HEK293 (cell line): ENCODE measurements at regions of chr11 and their contacts with region 1.

Region 1: DNA sequence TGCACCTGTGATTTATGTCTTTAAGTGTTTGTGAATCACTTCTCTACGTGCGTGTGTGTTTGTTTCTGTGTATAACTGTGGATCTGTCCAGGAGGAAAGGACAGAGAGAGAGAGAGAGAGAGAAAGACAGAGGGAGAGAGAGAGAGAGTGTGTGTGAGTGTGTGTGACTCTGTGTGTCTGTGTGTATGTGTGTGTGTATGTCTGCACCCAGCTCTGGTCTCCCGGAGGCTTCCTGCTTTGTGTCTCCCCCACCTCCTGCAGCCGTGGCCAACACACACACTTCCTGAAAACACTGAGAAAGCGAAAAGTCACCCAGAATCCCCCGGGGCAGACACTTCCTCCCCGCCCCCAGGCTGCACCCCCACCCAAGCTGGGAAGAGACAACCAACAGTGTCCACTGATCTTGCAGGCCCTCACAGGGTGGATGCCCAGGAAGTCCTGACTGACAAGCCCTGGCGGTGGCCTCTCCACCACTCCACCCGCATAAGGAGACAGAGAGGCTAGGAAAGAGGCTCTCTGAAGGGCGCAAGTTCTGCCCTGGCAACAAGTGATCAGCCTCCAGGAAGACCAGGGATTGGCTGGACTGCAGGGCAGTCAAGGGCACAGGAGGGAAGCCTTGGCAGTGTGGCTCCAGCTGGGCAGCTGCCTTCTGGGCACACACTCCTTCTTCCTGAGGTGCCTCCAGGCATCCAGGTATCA is 30.0 kb downstream of the ARAP1 start:
- H3K4me3 ChIP-seq: peak overlapping the region; percentile 62
- H3K27ac ChIP-seq: peak overlapping the region; percentile 78
- H3K4me1 ChIP-seq: peaks cover 5% of the 10 kb centered on the region; the same call in 1 of the 2 replicates
- CTCF ChIP-seq: no peak

Region 2: GRCh38 chr11:72519220-72519881 is 202.8 kb before region 1 on chr11:
- CTCF ChIA-PET with region 1: no interaction called
- POLR2A ChIA-PET with region 1: no interaction called
- H3K4me3 ChIP-seq: no peak overlapping the region
- H3K27ac ChIP-seq: no peak overlapping the region
- H3K4me1 ChIP-seq: no peaks in the 10 kb centered on the region
- CTCF ChIP-seq: no peak

Region 3: DNA sequence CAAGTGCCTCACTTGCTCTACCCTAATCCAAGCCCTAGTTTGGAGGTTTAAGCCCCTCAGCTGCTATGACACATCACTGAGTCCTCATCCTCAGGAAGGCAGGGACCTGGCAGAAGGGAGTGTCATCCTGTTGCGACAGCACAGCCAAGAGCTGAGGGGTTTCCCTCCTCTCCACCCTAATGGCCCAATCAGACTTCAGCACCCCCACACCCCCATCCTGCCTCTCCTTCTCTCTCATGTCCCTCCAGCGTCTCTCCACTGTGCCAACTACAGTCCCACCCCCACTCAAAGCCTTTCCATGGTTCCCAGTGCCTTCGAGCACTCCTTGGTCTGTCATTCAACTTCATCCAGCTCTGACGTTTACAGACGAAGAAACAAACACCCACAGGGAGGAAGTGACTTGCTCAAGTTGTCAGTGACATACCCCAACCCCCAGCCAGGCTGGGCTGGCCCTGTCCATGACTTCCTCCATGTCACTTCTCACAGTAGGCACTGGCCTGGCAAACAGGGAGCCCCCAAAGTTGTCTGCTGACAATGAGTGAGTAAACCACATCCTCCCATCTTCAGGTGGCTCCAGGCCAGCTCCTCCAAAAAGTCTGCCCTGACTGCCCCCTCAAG is 14.4 kb after region 1 on chr11:
- CTCF ChIA-PET with region 1: interaction called, 14 read pairs
- POLR2A ChIA-PET with region 1: interaction called, 3 read pairs
- H3K4me3 ChIP-seq: no peak overlapping the region
- H3K27ac ChIP-seq: no peak overlapping the region
- H3K4me1 ChIP-seq: no peaks in the 10 kb centered on the region
- CTCF ChIP-seq: no peak

Region 4: GRCh38 chr11:72848846-72849466 is 126.8 kb after region 1 on chr11:
- CTCF ChIA-PET with region 1: interaction called, 15 read pairs
- POLR2A ChIA-PET with region 1: no interaction called
- H3K4me3 ChIP-seq: no peak overlapping the region
- H3K27ac ChIP-seq: no peak overlapping the region
- H3K4me1 ChIP-seq: no peaks in the 10 kb centered on the region
- CTCF ChIP-seq: no peak